Activated CD4-positive, alpha-beta T cell treated with anti-CD3 and anti-CD28 coated beads for 36 hours (primary cell): ENCODE measurements at regions of chr1 and their contacts with region 1.

Region 1: GRCh38 chr1:196148367-196148970 is 459.8 kb downstream of the KCNT2 start:
- DNase-seq: no peak
- ATAC-seq: no peak
- H3K4me3 Mint-ChIP-seq: no peak overlapping the region
- H3K27ac Mint-ChIP-seq: no peak overlapping the region
- H3K4me1 Mint-ChIP-seq: no peaks in the 10 kb centered on the region
- H3K27me3 Mint-ChIP-seq: no peaks in the 10 kb centered on the region

Region 2: GRCh38 chr1:196128835-196129234 is 19.6 kb before region 1 on chr1:
- CTCF ChIA-PET with region 1: no interaction called
- POLR2A ChIA-PET with region 1: no interaction called
- intact Hi-C with region 1: no loop called
- DNase-seq: no peak
- ATAC-seq: no peak
- H3K4me3 Mint-ChIP-seq: no peak overlapping the region
- H3K27ac Mint-ChIP-seq: no peak overlapping the region
- H3K4me1 Mint-ChIP-seq: no peaks in the 10 kb centered on the region
- H3K27me3 Mint-ChIP-seq: no peaks in the 10 kb centered on the region

Region 3: DNA sequence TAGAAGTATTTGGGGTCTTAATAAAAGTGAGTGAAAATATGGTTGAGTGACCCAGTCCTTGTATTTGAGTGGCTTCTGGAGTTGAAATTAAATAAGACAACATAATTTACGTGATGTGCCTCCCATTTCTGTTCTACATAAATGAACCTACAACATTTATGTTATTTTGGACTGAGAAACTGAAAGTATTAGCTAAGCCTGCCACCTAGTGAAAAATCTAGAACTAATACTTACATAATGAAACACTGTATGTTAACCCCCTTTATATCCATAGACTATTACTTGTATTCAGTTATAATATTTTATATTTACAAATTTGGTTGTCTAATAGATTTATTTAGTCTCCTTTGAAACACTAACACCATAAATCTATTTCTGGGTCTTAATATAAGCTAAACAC is 160.9 kb after region 1 on chr1:
- CTCF ChIA-PET with region 1: interaction called, 7 read pairs
- POLR2A ChIA-PET with region 1: no interaction called
- intact Hi-C with region 1: loop called in 1 of 2 experiments (anchors 5 kb)
- DNase-seq: no peak
- ATAC-seq: no peak
- H3K4me3 Mint-ChIP-seq: no peak overlapping the region
- H3K27ac Mint-ChIP-seq: no peak overlapping the region
- H3K4me1 Mint-ChIP-seq: no peaks in the 10 kb centered on the region
- H3K27me3 Mint-ChIP-seq: no peaks in the 10 kb centered on the region

Region 4: GRCh38 chr1:196324345-196324744 is 175.9 kb after region 1 on chr1:
- CTCF ChIA-PET with region 1: no interaction called
- POLR2A ChIA-PET with region 1: no interaction called
- intact Hi-C with region 1: loop called in 1 of 2 experiments (anchors 5 kb)
- DNase-seq: no peak
- ATAC-seq: no peak
- H3K4me3 Mint-ChIP-seq: no peak overlapping the region
- H3K27ac Mint-ChIP-seq: no peak overlapping the region
- H3K4me1 Mint-ChIP-seq: no peaks in the 10 kb centered on the region
- H3K27me3 Mint-ChIP-seq: no peaks in the 10 kb centered on the region

Region 5: DNA sequence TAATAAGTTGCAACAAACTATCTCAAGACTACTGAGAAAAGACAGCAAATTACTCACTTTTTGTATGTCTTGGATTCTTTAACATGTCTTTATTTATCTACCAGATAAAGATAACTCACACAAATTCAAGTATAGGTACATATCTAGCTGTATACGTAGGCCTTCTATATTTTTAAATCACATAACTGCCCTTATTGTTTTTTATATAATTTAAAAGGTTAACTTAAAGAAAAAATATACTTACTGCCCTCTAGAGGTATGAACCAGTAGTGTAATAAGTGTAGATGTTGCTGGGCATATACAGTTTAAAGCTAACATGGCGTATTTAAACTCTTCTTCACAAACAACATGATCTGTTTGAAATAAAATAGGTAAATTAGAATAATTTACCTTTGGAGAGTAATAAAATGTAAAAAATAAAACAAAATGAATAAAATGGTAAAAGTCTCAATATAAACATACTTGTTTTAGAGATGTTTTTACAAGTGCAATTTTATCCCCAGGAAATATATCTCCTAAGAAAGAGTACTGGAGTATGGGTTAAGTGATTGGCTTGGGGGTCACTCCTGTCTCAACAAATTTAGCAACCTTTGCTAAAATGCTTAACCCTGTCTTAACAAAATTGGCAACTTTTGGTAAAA is 224.5 kb after region 1 on chr1:
- CTCF ChIA-PET with region 1: interaction called, 3 read pairs
- POLR2A ChIA-PET with region 1: no interaction called
- intact Hi-C with region 1: loop called in 1 of 2 experiments (anchors 5 kb)
- DNase-seq: no peak
- ATAC-seq: no peak
- H3K4me3 Mint-ChIP-seq: no peak overlapping the region
- H3K27ac Mint-ChIP-seq: no peak overlapping the region
- H3K4me1 Mint-ChIP-seq: no peaks in the 10 kb centered on the region
- H3K27me3 Mint-ChIP-seq: no peaks in the 10 kb centered on the region

Region 6: GRCh38 chr1:196660852-196661251 is 512.4 kb after region 1 on chr1:
- CTCF ChIA-PET with region 1: interaction called, 31 read pairs
- POLR2A ChIA-PET with region 1: no interaction called
- intact Hi-C with region 1: loop called (anchors 1 to 2 kb)
- DNase-seq: peak; percentile 10
- ATAC-seq: peak; percentile 36
- H3K4me3 Mint-ChIP-seq: no peak overlapping the region
- H3K27ac Mint-ChIP-seq: no peak overlapping the region
- H3K4me1 Mint-ChIP-seq: peaks cover 3% of the 10 kb centered on the region
- H3K27me3 Mint-ChIP-seq: no peaks in the 10 kb centered on the region